ENCODE measurements at regions of chr10 and their contacts with region 1.

Region 1: GRCh38 chr10:101031128-101031795 is at the starts of genes PDZD7 and SFXN3:
- DNase-seq: peak; percentile 94 to 98 (median 97)
- ATAC-seq: peak; percentile 76
- H3K4me3 ChIP-seq: peak within 1 kb of the TSS; percentile 99
- H3K4me3 Mint-ChIP-seq: peak within 1 kb of the TSS; percentile 95
- H3K27ac ChIP-seq: peak within 1 kb of the TSS; percentile 93 to 97
- H3K27ac Mint-ChIP-seq: peak within 1 kb of the TSS; percentile 97
- H3K4me1 ChIP-seq: peaks cover 38% of the 10 kb centered on the region
- H3K4me1 Mint-ChIP-seq: peaks cover 19% of the 10 kb centered on the region
- H3K27me3 ChIP-seq: no peaks in the 10 kb centered on the region
- H3K27me3 Mint-ChIP-seq: no peaks in the 10 kb centered on the region
- CTCF ChIP-seq: no peak
- total RNA-seq, gene PDZD7: 1.7 to 3.1 TPM
- total RNA-seq, gene SFXN3: 43.2 to 48.3 TPM

Region 2: DNA sequence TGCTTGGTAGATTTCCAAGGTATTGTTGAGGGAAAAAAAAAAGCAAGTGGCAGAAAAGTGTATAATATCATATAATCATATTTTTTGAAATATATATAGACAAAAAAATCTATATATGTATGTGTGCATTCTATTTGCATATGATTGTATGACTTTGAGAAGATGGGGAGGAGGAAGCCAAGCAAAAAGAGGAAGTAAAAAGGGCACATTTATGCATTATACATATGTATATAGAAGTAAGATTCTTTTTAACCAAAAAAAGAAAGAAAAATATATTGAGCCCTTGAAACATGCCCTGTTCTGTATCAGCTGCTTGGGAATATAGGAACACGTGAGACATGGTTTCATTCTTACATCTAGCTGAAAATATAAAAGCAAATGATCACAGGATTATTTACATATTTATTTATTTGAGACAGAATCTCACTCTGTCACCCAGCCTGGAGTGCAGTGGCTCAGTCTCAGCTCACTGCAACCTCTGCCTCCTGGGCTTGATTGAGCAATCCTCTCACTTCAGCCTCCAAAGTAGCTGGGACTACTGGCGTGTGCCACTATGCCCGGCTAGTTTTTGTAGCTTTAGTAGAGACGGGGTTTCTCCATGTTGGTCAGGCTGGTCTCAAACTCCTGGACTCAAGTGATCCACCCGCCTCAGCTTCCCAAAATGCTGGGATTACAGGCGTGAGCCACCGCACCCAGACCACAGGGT is 136.5 kb before region 1 on chr10:
- CTCF ChIA-PET with region 1: no interaction called
- POLR2A ChIA-PET with region 1: no interaction called
- intact Hi-C with region 1: no loop called
- DNase-seq: no peak
- ATAC-seq: no peak
- H3K4me3 ChIP-seq: no peak overlapping the region
- H3K4me3 Mint-ChIP-seq: no peak overlapping the region
- H3K27ac ChIP-seq: no peak overlapping the region
- H3K27ac Mint-ChIP-seq: no peak overlapping the region
- H3K4me1 ChIP-seq: peaks cover 5% of the 10 kb centered on the region
- H3K4me1 Mint-ChIP-seq: peaks cover 7% of the 10 kb centered on the region
- H3K27me3 ChIP-seq: peaks cover 9 to 12% of the 10 kb centered on the region in 2 experiments
- H3K27me3 Mint-ChIP-seq: peaks cover 46% of the 10 kb centered on the region
- CTCF ChIP-seq: no peak

Region 3: GRCh38 chr10:100998991-100999741 is 32.1 kb before region 1 on chr10:
- CTCF ChIA-PET with region 1: interaction called, 8 read pairs
- POLR2A ChIA-PET with region 1: interaction called, 44 read pairs
- intact Hi-C with region 1: loop called in 1 of 2 experiments (anchors 1 kb)
- DNase-seq: peak; percentile 61 to 90 (median 74)
- ATAC-seq: peak; percentile 66
- H3K4me3 ChIP-seq: peak overlapping the region; percentile 97
- H3K4me3 Mint-ChIP-seq: peak overlapping the region; percentile 90
- H3K27ac ChIP-seq: peak overlapping the region; percentile 82 to 90
- H3K27ac Mint-ChIP-seq: peak overlapping the region; percentile 76
- H3K4me1 ChIP-seq: peaks cover 41% of the 10 kb centered on the region
- H3K4me1 Mint-ChIP-seq: peaks cover 25% of the 10 kb centered on the region
- H3K27me3 ChIP-seq: no peaks in the 10 kb centered on the region
- H3K27me3 Mint-ChIP-seq: no peaks in the 10 kb centered on the region
- CTCF ChIP-seq: peak; percentile 96

Region 4: DNA sequence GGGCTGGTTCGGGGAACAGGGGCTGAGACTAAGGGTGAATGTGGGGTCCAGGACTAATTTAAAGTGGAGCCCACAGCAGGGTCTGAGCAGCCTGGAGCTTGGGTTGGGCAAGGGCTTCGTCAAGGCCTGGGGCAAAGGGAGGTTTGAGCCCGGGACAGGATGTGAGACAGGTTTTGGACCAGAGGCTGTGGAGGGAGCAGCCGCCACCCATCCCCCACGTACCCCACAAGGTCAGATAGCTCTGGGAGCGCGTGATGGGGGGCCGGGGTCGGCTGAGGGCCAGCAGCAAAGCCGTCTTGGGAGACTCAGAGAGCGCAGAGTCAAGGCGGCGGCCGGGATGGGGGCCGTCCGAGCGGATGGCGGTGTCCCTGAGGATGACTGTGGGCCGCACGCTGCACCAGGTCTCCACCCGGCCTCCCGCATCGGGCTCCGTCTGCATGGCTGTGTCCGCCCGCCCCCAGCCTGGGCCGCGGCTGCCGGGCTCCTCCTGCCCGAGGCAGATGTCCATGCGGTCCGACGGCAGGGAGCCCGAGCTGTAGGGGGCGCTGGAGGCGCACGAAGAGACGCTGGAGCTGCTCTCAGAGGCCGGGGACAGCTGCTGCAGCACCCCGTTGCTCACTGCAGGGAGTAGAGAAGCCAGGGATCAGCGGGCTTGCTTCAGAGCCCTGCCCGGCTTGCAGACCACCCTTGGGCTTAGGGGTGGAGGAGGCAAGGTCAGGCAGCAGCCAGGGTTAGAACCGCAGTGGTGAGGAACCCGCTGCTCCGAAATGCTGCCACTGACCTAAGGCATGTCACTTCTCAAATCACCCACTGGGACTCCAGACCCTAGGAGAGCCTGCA is 12.4 kb before region 1 on chr10:
- CTCF ChIA-PET with region 1: interaction called, 11 read pairs
- POLR2A ChIA-PET with region 1: interaction called, 4 read pairs
- intact Hi-C with region 1: no loop called
- DNase-seq: peak; percentile 47 to 82 (median 67)
- ATAC-seq: peak; percentile 79
- H3K4me3 ChIP-seq: no peak overlapping the region
- H3K4me3 Mint-ChIP-seq: no peak overlapping the region
- H3K27ac ChIP-seq: no peak overlapping the region
- H3K27ac Mint-ChIP-seq: no peak overlapping the region
- H3K4me1 ChIP-seq: peaks cover 20% of the 10 kb centered on the region
- H3K4me1 Mint-ChIP-seq: peaks cover 11% of the 10 kb centered on the region
- H3K27me3 ChIP-seq: peaks cover 36 to 39% of the 10 kb centered on the region in 2 experiments
- H3K27me3 Mint-ChIP-seq: peaks cover 70% of the 10 kb centered on the region
- CTCF ChIP-seq: peak; percentile 60

Region 5: DNA sequence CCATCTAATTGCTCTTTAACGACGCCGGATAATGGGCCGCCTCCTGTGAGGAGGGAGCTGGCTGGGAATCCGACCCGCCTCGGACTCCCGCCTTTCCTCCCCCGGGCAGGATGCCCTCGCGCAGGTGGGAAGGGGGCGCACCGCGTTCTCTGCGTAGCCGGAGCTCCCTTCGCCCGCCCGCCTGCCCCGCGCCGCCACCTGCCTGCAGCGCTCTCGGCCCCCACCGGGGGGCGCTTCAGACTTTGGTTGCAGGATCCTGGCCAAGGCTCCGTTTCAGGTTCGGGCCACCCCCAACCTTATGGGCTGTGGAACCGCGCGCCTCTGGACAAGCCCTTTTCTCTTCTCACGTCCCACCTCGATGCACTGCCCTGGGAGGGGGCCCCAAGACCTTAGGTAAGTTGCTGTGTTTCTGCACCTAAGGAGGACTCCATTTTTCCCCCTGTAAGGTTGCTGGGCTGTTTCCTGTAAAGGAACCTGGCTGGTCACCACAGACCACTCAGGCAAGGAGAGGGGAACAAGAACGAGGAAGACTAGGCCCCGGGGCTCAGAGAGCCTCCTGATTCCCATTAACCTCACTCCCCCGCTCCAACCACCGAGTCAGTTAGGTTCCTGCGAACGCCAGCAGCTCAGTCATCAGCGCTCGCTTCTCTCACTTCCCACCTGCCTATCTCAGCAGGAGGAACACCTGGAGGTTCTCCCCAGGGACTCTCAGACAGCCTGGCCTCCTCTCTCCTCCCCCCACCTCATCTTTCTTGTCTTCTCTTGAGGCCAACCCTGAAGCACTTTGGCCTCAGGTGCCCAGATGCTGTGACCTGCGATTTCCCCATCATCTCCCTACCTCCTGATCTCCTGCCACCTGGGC is 19.2 kb after region 1 on chr10:
- CTCF ChIA-PET with region 1: interaction called, 27 read pairs
- POLR2A ChIA-PET with region 1: no interaction called
- intact Hi-C with region 1: no loop called
- DNase-seq: peak; percentile 57 to 85 (median 76)
- ATAC-seq: peak; percentile 98
- H3K4me3 ChIP-seq: no peak overlapping the region
- H3K4me3 Mint-ChIP-seq: peak overlapping the region; percentile 39
- H3K27ac ChIP-seq: no peak overlapping the region
- H3K27ac Mint-ChIP-seq: no peak overlapping the region
- H3K4me1 ChIP-seq: peaks cover 20% of the 10 kb centered on the region
- H3K4me1 Mint-ChIP-seq: peaks cover 14% of the 10 kb centered on the region
- H3K27me3 ChIP-seq: peaks cover 44 to 46% of the 10 kb centered on the region in 2 experiments
- H3K27me3 Mint-ChIP-seq: peaks cover 52% of the 10 kb centered on the region
- CTCF ChIP-seq: peak; percentile 76

Region 6: DNA sequence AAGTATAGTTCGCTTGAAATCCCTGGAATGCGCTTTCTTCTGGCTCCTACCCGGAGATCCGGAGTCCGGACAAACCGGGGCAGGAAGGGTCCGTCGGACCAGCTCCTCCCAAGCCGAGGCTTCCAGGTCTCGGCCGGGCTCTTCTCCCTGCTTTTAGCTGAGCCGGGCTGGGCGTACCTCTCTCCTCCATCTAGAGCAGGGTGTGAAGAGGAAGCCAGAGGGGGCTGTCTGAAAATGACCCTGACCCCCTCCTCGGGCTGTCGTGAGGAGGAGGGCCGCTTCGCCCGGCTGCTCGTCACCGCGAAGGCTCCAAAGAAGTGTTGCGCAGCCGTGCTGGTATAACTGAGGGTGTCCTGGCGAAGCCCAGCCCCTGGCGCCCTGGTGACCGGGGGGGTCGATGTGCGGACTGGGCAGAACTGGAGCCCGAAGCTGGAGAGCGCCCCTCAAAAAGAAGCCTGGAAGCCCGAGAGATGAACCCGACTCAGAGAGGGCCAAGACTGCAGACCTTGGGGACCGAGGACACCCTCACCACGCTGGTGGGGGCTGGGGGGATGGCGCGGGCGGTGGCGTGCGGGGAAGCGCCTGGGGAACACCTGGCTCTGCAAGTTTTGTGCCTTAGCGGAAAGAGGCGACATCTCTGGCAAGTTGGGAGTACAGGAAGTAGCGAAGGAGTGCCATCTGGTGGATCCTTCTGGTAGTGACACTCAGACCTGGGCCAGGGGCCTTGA is 36.3 kb after region 1 on chr10:
- CTCF ChIA-PET with region 1: interaction called, 4 read pairs
- POLR2A ChIA-PET with region 1: interaction called, 5 read pairs
- intact Hi-C with region 1: loop called (anchors 5 kb)
- DNase-seq: peak; percentile 61 to 88 (median 69)
- ATAC-seq: peak; percentile 83
- H3K4me3 ChIP-seq: peak overlapping the region; percentile 70
- H3K4me3 Mint-ChIP-seq: peak overlapping the region; percentile 93
- H3K27ac ChIP-seq: no peak overlapping the region
- H3K27ac Mint-ChIP-seq: no peak overlapping the region
- H3K4me1 ChIP-seq: peaks cover 34% of the 10 kb centered on the region
- H3K4me1 Mint-ChIP-seq: peaks cover 30% of the 10 kb centered on the region
- H3K27me3 ChIP-seq: peaks cover 52 to 59% of the 10 kb centered on the region in 2 experiments
- H3K27me3 Mint-ChIP-seq: peaks cover 63% of the 10 kb centered on the region
- CTCF ChIP-seq: peak; percentile 96